BJ (cell line): ENCODE measurements at regions of chr17 and their contacts with region 1.

Region 1: DNA sequence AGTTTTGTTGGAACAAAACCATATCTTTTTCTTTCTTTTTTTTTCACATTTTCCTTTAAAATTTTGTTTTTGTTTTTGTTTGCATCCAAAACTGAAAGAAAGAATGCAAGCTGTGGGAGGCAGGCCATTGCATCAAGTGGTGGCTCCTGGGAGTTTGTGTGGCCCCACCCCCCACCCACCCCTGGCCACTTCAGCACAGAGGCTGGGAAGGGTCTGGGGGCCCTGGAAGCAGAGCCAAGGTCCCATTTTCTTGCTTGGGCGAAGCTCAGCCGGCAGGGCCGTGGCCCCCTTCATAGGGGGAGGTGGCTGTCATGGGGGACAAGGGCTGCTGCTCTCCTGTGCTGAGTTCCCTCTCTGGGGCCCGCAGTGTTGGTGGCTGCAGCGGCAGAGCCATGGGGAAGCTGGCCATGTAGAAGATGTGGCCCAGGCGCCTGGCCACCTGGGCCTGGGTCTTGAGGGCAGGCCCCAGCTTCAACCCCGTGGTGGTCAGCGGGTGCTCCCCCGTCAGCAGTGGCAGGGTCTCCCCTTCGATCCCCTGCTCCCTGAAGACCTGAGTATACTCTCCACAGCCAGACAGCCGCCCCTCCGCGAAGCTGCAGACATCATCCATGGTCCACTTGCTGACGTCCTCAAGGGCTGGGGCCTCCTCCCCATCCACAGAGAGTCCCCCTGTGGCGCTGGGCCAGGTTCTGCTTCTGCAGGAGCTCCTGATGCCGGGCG is 19.8 kb downstream of the PAFAH1B1 start:
- DNase-seq: no peak
- H3K4me3 ChIP-seq: no peak overlapping the region
- H3K27me3 ChIP-seq: no peaks in the 10 kb centered on the region
- CTCF ChIP-seq: no peak

Region 2: DNA sequence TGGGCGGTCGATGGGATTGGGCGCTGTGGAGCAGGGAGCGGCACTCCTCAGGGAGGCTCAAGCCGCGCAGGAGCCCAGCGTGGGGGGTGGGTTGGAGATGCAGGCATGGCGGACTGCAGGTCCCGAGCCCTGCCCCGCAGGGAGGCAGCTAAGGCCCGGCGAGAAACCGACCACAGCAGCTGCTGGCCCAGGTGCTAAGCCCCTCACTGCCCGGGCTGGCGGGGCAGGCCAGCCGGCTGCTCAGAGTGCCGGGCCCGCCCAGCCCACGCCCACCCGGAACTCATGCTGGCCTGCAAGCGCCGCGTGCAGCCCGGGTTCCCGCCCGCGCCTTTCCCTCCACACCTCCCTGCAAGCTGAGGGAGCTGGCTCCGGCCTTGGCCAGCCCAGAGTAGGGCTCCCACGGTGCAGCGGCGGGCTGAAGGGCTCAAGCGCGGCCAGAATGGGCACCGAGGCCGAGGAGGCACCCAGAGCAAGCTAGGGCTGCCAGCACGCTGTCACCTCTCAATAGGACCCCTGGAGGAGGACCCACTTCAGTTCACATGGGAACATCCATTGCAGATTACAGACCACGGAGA is 81.0 kb before region 1 on chr17:
- CTCF ChIA-PET with region 1: no interaction called
- POLR2A ChIA-PET with region 1: interaction called, 17 read pairs
- DNase-seq: no peak
- H3K4me3 ChIP-seq: no peak overlapping the region
- H3K27me3 ChIP-seq: no peaks in the 10 kb centered on the region
- CTCF ChIP-seq: no peak

Region 3: GRCh38 chr17:2636201-2636910 is 23.1 kb after region 1 on chr17:
- CTCF ChIA-PET with region 1: no interaction called
- POLR2A ChIA-PET with region 1: interaction called, 20 read pairs
- DNase-seq: no peak
- H3K4me3 ChIP-seq: no peak overlapping the region
- H3K27me3 ChIP-seq: no peaks in the 10 kb centered on the region
- CTCF ChIP-seq: no peak

Region 4: GRCh38 chr17:2656283-2656682 is 43.0 kb after region 1 on chr17:
- CTCF ChIA-PET with region 1: no interaction called
- POLR2A ChIA-PET with region 1: interaction called, 13 read pairs
- DNase-seq: no peak
- H3K4me3 ChIP-seq: no peak overlapping the region
- H3K27me3 ChIP-seq: no peaks in the 10 kb centered on the region
- CTCF ChIP-seq: no peak